ENCODE measurements at regions of chr16 and their contacts with region 1.

Region 1: DNA sequence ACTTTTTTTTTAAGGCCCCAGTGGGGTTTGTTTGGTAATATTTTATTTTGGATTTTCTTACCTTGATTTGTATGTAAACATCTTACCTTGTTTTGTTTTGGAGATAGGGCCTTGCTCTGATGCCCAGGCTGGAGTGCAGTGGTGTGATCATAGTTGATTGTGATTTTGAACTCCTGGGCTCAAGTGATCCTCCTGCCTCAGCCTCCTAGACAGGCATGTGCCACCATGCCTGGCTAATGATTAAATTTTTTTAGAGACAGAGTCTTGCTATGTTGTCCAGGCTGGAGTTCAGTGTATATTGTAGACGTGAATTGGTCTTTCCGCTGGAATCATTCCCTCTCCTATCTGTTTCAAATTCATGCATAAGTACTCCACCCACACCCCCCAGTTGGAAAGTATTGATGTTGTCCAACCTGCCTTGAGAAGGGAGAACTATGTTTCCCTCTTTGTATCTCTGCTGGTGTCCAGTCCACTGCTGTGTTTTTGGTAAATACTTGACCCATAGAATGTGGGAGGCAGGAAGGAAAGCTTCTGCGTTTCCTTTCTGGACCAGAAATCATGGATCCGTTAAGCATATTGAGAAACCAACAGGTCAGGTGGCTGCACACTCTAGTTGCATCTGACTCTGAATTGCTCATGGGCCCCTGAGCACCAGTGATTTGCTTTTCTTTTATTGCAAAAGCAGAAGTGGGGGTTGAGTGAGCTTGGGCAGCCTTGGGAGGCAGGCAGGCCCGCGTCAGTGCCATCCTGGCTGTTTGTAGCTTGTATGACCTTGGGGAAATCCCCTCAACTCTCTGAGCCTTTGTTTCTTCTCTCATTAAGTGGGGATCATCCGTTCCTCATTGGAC is 25.0 kb downstream of the RMI2 start:
- DNase-seq: peak; percentile 93
- ATAC-seq: peak; percentile 98
- H3K4me3 ChIP-seq: no peak overlapping the region
- H3K4me3 Mint-ChIP-seq: peak overlapping the region; percentile 62
- H3K27ac ChIP-seq: peak overlapping the region; percentile 44 to 56
- H3K27ac Mint-ChIP-seq: peak overlapping the region; percentile 71
- H3K4me1 ChIP-seq: peaks cover 23 to 26% of the 10 kb centered on the region in 2 donors
- H3K4me1 Mint-ChIP-seq: peaks cover 35% of the 10 kb centered on the region
- H3K27me3 ChIP-seq: no peaks in the 10 kb centered on the region
- H3K27me3 Mint-ChIP-seq: no peaks in the 10 kb centered on the region
- CTCF ChIP-seq: no peak

Region 2: GRCh38 chr16:10971560-10971961 is 398.7 kb before region 1 on chr16:
- CTCF ChIA-PET with region 1: interaction called, 11 read pairs
- POLR2A ChIA-PET with region 1: no interaction called
- intact Hi-C with region 1: no loop called
- DNase-seq: peak; percentile 64
- ATAC-seq: peak; percentile 39
- H3K4me3 ChIP-seq: no peak overlapping the region
- H3K4me3 Mint-ChIP-seq: no peak overlapping the region
- H3K27ac ChIP-seq: no peak overlapping the region
- H3K27ac Mint-ChIP-seq: no peak overlapping the region
- H3K4me1 ChIP-seq: no peaks in the 10 kb centered on the region
- H3K4me1 Mint-ChIP-seq: peaks cover 6% of the 10 kb centered on the region
- H3K27me3 ChIP-seq: no peaks in the 10 kb centered on the region
- H3K27me3 Mint-ChIP-seq: no peaks in the 10 kb centered on the region
- CTCF ChIP-seq: peak; percentile 89

Region 3: DNA sequence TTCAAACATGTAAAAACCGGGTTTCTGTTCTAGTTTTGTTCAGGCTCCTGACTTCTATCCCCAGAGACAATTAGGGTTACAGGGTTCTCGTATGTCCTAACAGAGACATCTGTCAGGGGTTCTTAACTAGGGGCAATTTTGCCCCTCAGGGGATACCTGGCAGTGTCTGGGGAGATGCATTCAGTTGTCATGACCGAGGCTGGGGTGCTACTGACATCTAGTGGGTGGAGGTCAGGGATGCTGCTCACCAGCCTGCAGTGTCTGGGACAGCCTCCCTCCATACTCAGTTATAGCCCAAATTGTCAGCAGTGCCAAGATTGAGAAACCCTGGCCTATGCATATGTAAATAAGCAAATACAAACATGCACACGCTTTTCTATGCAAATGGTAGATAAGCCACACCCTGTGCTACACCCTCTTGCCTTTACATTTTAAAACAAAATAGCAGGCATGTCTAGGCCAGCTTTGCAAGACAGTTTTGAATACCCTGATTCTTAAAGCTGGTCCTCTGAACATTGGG is 388.6 kb before region 1 on chr16:
- CTCF ChIA-PET with region 1: interaction called, 3 read pairs
- POLR2A ChIA-PET with region 1: interaction called, 13 read pairs
- intact Hi-C with region 1: no loop called
- DNase-seq: peak; percentile 73
- ATAC-seq: peak; percentile 93
- H3K4me3 ChIP-seq: no peak overlapping the region
- H3K4me3 Mint-ChIP-seq: peak overlapping the region; percentile 82
- H3K27ac ChIP-seq: peak overlapping the region in 1 of 2 donors; percentile 10
- H3K27ac Mint-ChIP-seq: peak overlapping the region; percentile 84
- H3K4me1 ChIP-seq: peaks cover 4 to 22% of the 10 kb centered on the region in 2 donors
- H3K4me1 Mint-ChIP-seq: peaks cover 39% of the 10 kb centered on the region
- H3K27me3 ChIP-seq: no peaks in the 10 kb centered on the region
- H3K27me3 Mint-ChIP-seq: no peaks in the 10 kb centered on the region
- CTCF ChIP-seq: peak; percentile 66

Region 4: GRCh38 chr16:11105038-11105903 is 265.0 kb before region 1 on chr16:
- CTCF ChIA-PET with region 1: no interaction called
- POLR2A ChIA-PET with region 1: interaction called, 15 read pairs
- intact Hi-C with region 1: no loop called
- DNase-seq: peak; percentile 70
- ATAC-seq: peak; percentile 92
- H3K4me3 ChIP-seq: peak overlapping the region in 2 of 5 experiments; percentile 8
- H3K4me3 Mint-ChIP-seq: peak overlapping the region; percentile 78
- H3K27ac ChIP-seq: peak overlapping the region in 1 of 2 donors; percentile 68
- H3K27ac Mint-ChIP-seq: peak overlapping the region; percentile 83
- H3K4me1 ChIP-seq: peaks cover 18 to 23% of the 10 kb centered on the region in 2 donors
- H3K4me1 Mint-ChIP-seq: peaks cover 34% of the 10 kb centered on the region
- H3K27me3 ChIP-seq: no peaks in the 10 kb centered on the region
- H3K27me3 Mint-ChIP-seq: no peaks in the 10 kb centered on the region
- CTCF ChIP-seq: no peak

Region 5: DNA sequence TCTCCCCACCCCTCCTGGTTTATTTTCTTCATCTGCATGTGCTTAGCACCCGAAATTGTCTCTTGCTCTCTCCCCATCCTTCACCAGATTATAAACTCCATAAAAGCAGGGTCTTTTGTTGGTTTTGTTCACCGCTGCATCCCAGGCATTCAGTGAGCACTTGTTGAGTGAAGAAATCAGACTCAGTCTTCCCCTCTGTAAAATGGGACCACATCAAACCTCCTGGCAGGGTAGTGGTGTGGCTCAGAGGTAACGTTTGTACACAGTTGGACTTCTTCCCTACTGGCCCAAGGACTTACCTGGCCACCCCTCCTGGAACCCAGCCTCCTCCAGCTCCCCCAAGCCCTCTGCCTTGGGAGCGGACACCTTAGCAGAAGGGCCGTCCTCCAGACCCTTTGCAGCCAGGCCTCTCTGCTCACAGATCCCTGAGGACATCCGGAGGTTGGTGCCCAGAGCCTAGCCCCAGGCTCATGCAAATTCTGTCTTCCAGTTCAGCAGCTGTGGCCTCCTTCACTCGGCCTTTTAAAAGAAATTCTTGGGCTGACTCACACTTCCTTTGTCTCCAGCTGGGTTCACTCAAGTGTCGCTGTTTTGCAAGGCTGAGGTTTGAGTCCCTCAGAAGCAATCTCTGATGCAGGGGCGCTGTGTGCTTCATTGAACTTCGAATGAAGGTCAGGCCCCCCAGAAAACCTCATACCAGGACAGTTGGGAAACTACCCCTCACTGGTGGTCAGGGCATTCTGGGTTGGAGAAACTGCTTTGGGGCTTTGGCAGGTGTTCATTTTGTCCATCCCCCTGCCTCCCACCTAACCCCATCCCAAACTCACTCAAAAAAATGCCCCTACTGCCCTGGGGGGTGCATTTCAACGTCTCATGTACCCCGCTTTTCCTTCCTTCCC is 41.9 kb before region 1 on chr16:
- CTCF ChIA-PET with region 1: interaction called, 8 read pairs
- POLR2A ChIA-PET with region 1: no interaction called
- intact Hi-C with region 1: loop called (anchors 1 kb)
- DNase-seq: peak; percentile 90
- ATAC-seq: peak; percentile 70
- H3K4me3 ChIP-seq: peak overlapping the region in 4 of 5 experiments; percentile 30 to 64 (median 36)
- H3K4me3 Mint-ChIP-seq: peak overlapping the region; percentile 81
- H3K27ac ChIP-seq: peak overlapping the region; percentile 91 to 94
- H3K27ac Mint-ChIP-seq: peak overlapping the region; percentile 93
- H3K4me1 ChIP-seq: peaks cover 59 to 69% of the 10 kb centered on the region in 2 donors
- H3K4me1 Mint-ChIP-seq: peaks cover 62% of the 10 kb centered on the region
- H3K27me3 ChIP-seq: no peaks in the 10 kb centered on the region
- H3K27me3 Mint-ChIP-seq: no peaks in the 10 kb centered on the region
- CTCF ChIP-seq: no peak

Region 6: DNA sequence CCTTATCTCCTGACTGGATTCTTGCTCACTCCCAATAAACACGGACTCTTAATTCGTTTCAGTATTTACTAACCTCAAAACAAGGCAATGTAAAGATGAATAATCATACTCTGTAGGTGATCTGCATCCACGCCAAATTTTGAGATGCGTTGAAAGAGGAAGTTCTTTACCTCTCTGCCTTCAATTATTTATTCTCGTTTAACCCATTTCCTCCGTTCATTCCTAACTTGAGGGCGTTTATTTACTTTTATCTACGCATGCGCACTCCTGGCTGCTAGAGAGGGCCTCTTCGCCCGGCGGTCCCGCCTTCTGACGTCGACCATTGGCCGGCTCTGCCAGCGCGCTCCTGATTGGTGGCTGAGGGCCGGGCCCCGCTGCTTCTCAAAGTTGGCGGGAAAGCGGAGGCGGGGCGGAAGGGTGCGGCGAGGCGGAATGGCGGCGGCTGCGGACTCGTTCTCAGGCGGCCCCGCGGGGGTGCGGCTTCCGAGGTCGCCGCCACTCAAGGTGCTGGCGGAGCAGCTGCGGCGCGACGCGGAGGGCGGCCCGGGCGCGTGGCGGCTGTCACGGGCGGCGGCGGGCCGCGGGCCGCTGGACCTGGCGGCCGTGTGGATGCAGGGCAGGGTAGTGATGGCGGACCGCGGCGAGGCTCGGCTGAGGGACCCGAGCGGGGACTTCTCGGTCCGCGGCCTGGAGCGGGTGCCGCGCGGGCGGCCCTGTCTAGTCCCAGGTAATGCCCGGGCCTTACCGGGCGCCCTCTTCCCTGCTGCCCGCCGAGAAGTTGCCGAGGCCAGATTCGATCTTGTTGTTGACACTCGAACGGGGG is 25.1 kb before region 1 on chr16 and contains the start of gene RMI2:
- CTCF ChIA-PET with region 1: interaction called, 5 read pairs
- POLR2A ChIA-PET with region 1: no interaction called
- intact Hi-C with region 1: loop called (anchors 1 kb)
- DNase-seq: peak; percentile 97
- ATAC-seq: peak; percentile 100
- H3K4me3 ChIP-seq: peak within 1 kb of the TSS; percentile 61 to 76 (median 70)
- H3K4me3 Mint-ChIP-seq: peak within 1 kb of the TSS; percentile 90
- H3K27ac ChIP-seq: peak within 1 kb of the TSS in 1 of 2 donors; percentile 26
- H3K27ac Mint-ChIP-seq: peak within 1 kb of the TSS; percentile 78
- H3K4me1 ChIP-seq: peaks cover 8 to 25% of the 10 kb centered on the region in 2 donors
- H3K4me1 Mint-ChIP-seq: peaks cover 39% of the 10 kb centered on the region
- H3K27me3 ChIP-seq: no peaks in the 10 kb centered on the region
- H3K27me3 Mint-ChIP-seq: no peaks in the 10 kb centered on the region
- CTCF ChIP-seq: no peak
- total RNA-seq, gene RMI2: 25.5 and 27.0 TPM in 2 replicates

Region 7: GRCh38 chr16:11396241-11397048 is 26.1 kb after region 1 on chr16:
- CTCF ChIA-PET with region 1: interaction called, 14 read pairs
- POLR2A ChIA-PET with region 1: no interaction called
- intact Hi-C with region 1: no loop called
- DNase-seq: peak; percentile 76
- ATAC-seq: peak; percentile 79
- H3K4me3 ChIP-seq: no peak overlapping the region
- H3K4me3 Mint-ChIP-seq: no peak overlapping the region
- H3K27ac ChIP-seq: no peak overlapping the region
- H3K27ac Mint-ChIP-seq: no peak overlapping the region
- H3K4me1 ChIP-seq: peaks cover 0 to 6% of the 10 kb centered on the region in 2 donors
- H3K4me1 Mint-ChIP-seq: peaks cover 8% of the 10 kb centered on the region
- H3K27me3 ChIP-seq: peaks cover 0 to 3% (median 1%) of the 10 kb centered on the region in 4 experiments
- H3K27me3 Mint-ChIP-seq: no peaks in the 10 kb centered on the region
- CTCF ChIP-seq: peak; percentile 99

Region 8: DNA sequence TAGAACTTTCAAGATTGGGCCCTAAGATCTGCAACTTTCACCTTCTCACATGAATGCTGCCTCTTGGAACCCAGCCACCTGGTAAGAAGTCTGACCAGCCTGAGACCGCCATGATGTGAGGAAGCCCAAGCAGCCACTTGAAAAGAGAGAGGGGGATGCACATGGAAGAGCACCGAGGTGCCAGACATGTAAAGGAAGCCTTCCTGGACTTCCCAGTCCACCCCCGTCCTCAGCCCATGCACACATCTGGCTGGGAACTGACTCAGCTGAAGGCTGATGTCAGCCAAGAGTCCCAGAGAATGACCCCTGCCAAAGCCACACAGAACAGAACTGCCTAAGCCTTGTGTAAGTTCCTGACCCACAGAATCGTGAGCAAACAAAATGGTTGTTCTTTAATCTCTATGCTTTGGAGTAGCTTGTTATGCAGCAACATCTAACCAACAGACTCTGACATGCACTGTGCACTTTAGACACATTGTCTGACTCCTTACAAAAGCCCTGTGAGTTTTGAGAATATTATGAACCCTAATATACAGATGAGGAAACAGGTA is 61.7 kb after region 1 on chr16:
- CTCF ChIA-PET with region 1: no interaction called
- POLR2A ChIA-PET with region 1: no interaction called
- intact Hi-C with region 1: no loop called
- DNase-seq: no peak
- ATAC-seq: no peak
- H3K4me3 ChIP-seq: no peak overlapping the region
- H3K4me3 Mint-ChIP-seq: no peak overlapping the region
- H3K27ac ChIP-seq: no peak overlapping the region
- H3K27ac Mint-ChIP-seq: no peak overlapping the region
- H3K4me1 ChIP-seq: no peaks in the 10 kb centered on the region
- H3K4me1 Mint-ChIP-seq: no peaks in the 10 kb centered on the region
- H3K27me3 ChIP-seq: peaks cover 0 to 5% (median 2%) of the 10 kb centered on the region in 4 experiments
- H3K27me3 Mint-ChIP-seq: no peaks in the 10 kb centered on the region
- CTCF ChIP-seq: no peak

Region 9: GRCh38 chr16:11470676-11471415 is 100.5 kb after region 1 on chr16:
- CTCF ChIA-PET with region 1: no interaction called
- POLR2A ChIA-PET with region 1: no interaction called
- intact Hi-C with region 1: no loop called
- DNase-seq: no peak
- ATAC-seq: no peak
- H3K4me3 ChIP-seq: no peak overlapping the region
- H3K4me3 Mint-ChIP-seq: no peak overlapping the region
- H3K27ac ChIP-seq: no peak overlapping the region
- H3K27ac Mint-ChIP-seq: no peak overlapping the region
- H3K4me1 ChIP-seq: no peaks in the 10 kb centered on the region
- H3K4me1 Mint-ChIP-seq: no peaks in the 10 kb centered on the region
- H3K27me3 ChIP-seq: no peaks in the 10 kb centered on the region
- H3K27me3 Mint-ChIP-seq: no peaks in the 10 kb centered on the region
- CTCF ChIP-seq: no peak

Region 10: GRCh38 chr16:11506741-11507305 is 136.5 kb after region 1 on chr16:
- CTCF ChIA-PET with region 1: no interaction called
- POLR2A ChIA-PET with region 1: no interaction called
- intact Hi-C with region 1: no loop called
- DNase-seq: peak; percentile 71
- ATAC-seq: peak; percentile 83
- H3K4me3 ChIP-seq: peak overlapping the region in 4 of 5 experiments; percentile 24 to 49 (median 41)
- H3K4me3 Mint-ChIP-seq: peak overlapping the region; percentile 86
- H3K27ac ChIP-seq: peak overlapping the region; percentile 26 to 48
- H3K27ac Mint-ChIP-seq: peak overlapping the region; percentile 83
- H3K4me1 ChIP-seq: peaks cover 8 to 13% of the 10 kb centered on the region in 2 donors
- H3K4me1 Mint-ChIP-seq: peaks cover 15% of the 10 kb centered on the region
- H3K27me3 ChIP-seq: no peaks in the 10 kb centered on the region
- H3K27me3 Mint-ChIP-seq: no peaks in the 10 kb centered on the region
- CTCF ChIP-seq: peak; percentile 46